Caco-2 (cell line): ENCODE measurements at regions of chr4 and their contacts with region 1.

Region 1: DNA sequence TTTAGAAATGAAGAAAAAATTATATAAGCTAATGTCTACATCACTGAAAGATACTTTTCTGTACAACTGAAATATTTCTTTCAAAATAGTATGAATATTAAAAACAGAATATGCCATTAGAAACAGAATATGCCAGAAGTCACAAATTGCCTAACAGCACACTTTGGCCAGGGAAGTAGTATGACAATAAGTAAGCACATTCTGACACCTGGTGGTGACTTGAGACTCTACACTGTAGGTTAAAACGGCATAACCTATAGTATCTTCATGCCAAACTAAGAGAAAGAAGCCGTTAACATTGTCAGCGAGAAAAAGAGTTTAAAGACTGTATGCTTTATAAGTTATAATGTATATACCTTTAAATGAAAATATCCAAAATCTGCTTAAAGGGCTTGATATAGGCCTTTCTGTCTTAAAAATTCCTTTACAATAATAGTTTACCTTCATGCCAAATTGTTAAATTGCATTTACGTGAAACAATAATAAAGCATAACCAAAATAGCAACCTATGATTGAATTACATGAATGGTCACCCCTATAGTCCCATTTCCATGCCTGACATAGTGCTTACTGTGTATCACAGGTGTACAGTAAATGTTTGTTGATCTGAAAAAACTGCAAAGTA is 32.8 kb downstream of the FAM13A start:
- DNase-seq: peak; percentile 54 to 64
- H3K4me3 ChIP-seq: no peak overlapping the region
- H3K4me3 Mint-ChIP-seq: no peak overlapping the region
- H3K27ac Mint-ChIP-seq: no peak overlapping the region
- H3K4me1 ChIP-seq: peaks cover 13% of the 10 kb centered on the region
- H3K4me1 Mint-ChIP-seq: peaks cover 17% of the 10 kb centered on the region
- H3K27me3 ChIP-seq: no peaks in the 10 kb centered on the region
- H3K27me3 Mint-ChIP-seq: no peaks in the 10 kb centered on the region
- CTCF ChIP-seq: peak; percentile 63 to 82

Region 2: DNA sequence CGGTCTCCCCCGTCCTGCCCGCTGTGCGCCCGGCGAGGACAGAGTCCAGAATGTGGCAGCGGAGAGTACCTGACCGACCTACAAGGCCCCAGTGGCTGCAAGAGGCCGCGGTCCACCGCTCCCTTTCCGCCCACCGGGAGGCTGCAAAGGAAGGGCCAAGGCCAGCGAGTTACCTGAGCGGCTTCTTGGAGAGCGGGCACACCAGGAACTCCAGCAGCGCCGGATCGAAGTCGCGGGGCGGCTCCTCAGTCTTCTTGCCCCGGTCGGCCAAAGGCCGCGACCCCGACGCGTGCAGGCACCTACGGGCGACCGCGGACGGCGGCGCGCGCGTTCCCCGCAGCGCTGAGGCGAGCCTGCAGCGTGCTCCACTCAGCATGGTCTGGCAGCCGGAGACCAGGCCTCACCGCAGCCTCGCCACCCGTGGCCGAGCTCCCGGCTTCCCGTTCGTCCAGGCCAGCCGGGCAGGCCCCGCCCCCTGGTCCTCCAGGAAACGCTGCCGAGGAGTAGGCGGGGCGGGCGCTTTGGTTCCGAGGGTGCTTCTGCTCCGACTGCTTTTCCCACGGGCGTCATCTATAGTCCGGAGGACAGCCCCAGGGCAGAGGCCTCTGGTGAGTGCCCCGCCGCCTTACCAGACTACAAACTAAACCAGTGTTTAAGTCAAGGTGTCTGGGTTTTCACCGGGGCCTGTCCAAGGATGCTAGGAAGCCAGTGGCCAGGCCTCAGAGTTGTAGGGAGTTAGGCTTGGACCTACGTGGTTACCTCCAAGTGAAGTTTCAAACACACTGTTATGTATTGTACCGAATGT is 500.6 kb before region 1 on chr4 and contains the start of gene PYURF:
- CTCF ChIA-PET with region 1: no interaction called
- POLR2A ChIA-PET with region 1: no interaction called
- intact Hi-C with region 1: loop called (anchors 5 kb)
- DNase-seq: peak; percentile 93 to 95
- H3K4me3 ChIP-seq: peak within 1 kb of the TSS; percentile 56
- H3K4me3 Mint-ChIP-seq: peak within 1 kb of the TSS; percentile 93
- H3K27ac Mint-ChIP-seq: peak within 1 kb of the TSS; percentile 91
- H3K4me1 ChIP-seq: peaks cover 7% of the 10 kb centered on the region; the same call in 1 of the 2 replicates
- H3K4me1 Mint-ChIP-seq: peaks cover 7% of the 10 kb centered on the region
- H3K27me3 ChIP-seq: no peaks in the 10 kb centered on the region
- H3K27me3 Mint-ChIP-seq: no peaks in the 10 kb centered on the region
- CTCF ChIP-seq: no peak
- total RNA-seq, gene PYURF: 41.6 and 46.6 TPM in 2 replicates

Region 3: DNA sequence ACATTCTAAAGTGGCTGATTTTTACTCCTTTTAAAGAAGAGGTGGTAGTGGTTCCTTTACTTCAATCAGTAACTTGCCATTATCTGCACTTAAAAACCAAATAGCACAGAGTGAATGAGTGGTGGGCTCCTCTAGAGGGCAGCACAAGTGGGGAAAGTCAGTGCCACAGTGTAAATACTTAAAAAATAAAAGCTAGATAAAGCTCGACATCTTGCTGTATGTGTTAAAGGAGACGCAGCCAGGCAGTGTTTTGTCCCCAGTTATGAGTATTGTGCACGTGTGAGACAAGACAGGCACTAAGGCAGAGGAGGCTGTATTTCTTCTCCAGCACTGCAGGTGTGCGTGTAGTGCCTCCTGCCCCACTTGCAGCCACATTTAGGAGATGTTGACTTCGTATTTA is 351.2 kb before region 1 on chr4:
- CTCF ChIA-PET with region 1: interaction called, 4 read pairs
- POLR2A ChIA-PET with region 1: no interaction called
- intact Hi-C with region 1: loop called (anchors 1 kb)
- DNase-seq: peak in 1 of 2 experiments; percentile 50
- H3K4me3 ChIP-seq: no peak overlapping the region
- H3K4me3 Mint-ChIP-seq: no peak overlapping the region
- H3K27ac Mint-ChIP-seq: no peak overlapping the region
- H3K4me1 ChIP-seq: no peaks in the 10 kb centered on the region
- H3K4me1 Mint-ChIP-seq: no peaks in the 10 kb centered on the region
- H3K27me3 ChIP-seq: no peaks in the 10 kb centered on the region
- H3K27me3 Mint-ChIP-seq: no peaks in the 10 kb centered on the region
- CTCF ChIP-seq: peak; percentile 63 to 72

Region 4: GRCh38 chr4:88706574-88706973 is 317.6 kb before region 1 on chr4:
- CTCF ChIA-PET with region 1: interaction called, 8 read pairs
- POLR2A ChIA-PET with region 1: no interaction called
- intact Hi-C with region 1: loop called (anchors 1 kb)
- DNase-seq: peak; percentile 39 to 46
- H3K4me3 ChIP-seq: no peak overlapping the region
- H3K4me3 Mint-ChIP-seq: no peak overlapping the region
- H3K27ac Mint-ChIP-seq: no peak overlapping the region
- H3K4me1 ChIP-seq: no peaks in the 10 kb centered on the region
- H3K4me1 Mint-ChIP-seq: no peaks in the 10 kb centered on the region
- H3K27me3 ChIP-seq: no peaks in the 10 kb centered on the region
- H3K27me3 Mint-ChIP-seq: no peaks in the 10 kb centered on the region
- CTCF ChIP-seq: peak; percentile 45 to 52

Region 5: GRCh38 chr4:88823058-88823919 is 200.9 kb before region 1 on chr4:
- CTCF ChIA-PET with region 1: interaction called, 10 read pairs
- POLR2A ChIA-PET with region 1: no interaction called
- intact Hi-C with region 1: loop called (anchors 1 kb)
- DNase-seq: peak; percentile 79 to 85
- H3K4me3 ChIP-seq: peak overlapping the region; percentile 41
- H3K4me3 Mint-ChIP-seq: peak overlapping the region; percentile 71
- H3K27ac Mint-ChIP-seq: peak overlapping the region; percentile 51
- H3K4me1 ChIP-seq: no peaks in the 10 kb centered on the region; the same call in 1 of the 2 replicates
- H3K4me1 Mint-ChIP-seq: no peaks in the 10 kb centered on the region
- H3K27me3 ChIP-seq: no peaks in the 10 kb centered on the region
- H3K27me3 Mint-ChIP-seq: no peaks in the 10 kb centered on the region
- CTCF ChIP-seq: no peak

Region 6: GRCh38 chr4:88893961-88894360 is 130.2 kb before region 1 on chr4:
- CTCF ChIA-PET with region 1: no interaction called
- POLR2A ChIA-PET with region 1: no interaction called
- intact Hi-C with region 1: loop called (anchors 2 kb)
- DNase-seq: no peak
- H3K4me3 ChIP-seq: no peak overlapping the region
- H3K4me3 Mint-ChIP-seq: no peak overlapping the region
- H3K27ac Mint-ChIP-seq: no peak overlapping the region
- H3K4me1 ChIP-seq: no peaks in the 10 kb centered on the region
- H3K4me1 Mint-ChIP-seq: no peaks in the 10 kb centered on the region
- H3K27me3 ChIP-seq: no peaks in the 10 kb centered on the region
- H3K27me3 Mint-ChIP-seq: peaks cover 3% of the 10 kb centered on the region
- CTCF ChIP-seq: no peak